ENCODE measurements at regions of chr11 and their contacts with region 1.

Region 1: GRCh38 chr11:26649884-26650283 is 72.0 kb downstream of the SLC5A12 start:
- DNase-seq: peak; percentile 61
- H3K4me3 ChIP-seq: no peak overlapping the region
- H3K27ac ChIP-seq: no peak overlapping the region
- H3K4me1 ChIP-seq: no peaks in the 10 kb centered on the region
- H3K27me3 ChIP-seq: no peaks in the 10 kb centered on the region
- CTCF ChIP-seq: peak; percentile 51 to 67 (median 65)
- EP300 ChIP-seq: no peak
- POLR2A ChIP-seq: no peak

Region 2: DNA sequence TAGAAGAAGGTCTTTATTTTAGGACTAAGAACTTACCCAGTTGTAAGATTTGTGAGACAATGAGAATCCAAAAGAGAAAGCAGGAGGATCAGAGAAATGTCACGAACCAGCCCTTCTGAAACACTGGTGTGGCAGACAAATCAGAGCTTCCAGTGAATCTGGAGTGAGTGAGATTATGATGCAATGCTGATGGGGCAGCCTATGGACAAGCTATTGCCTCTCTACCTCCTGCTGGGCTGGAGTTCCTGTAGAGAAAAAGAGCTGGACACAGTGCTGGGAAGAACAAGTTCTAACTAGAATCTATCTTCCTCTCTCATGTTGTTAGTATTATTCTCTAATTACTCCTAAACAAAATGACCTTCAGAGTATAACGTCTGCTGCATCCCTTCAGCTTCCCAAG is 330.0 kb before region 1 on chr11:
- in situ Hi-C with region 1: loop called in 1 of 4 experiments (anchors 25 kb)
- intact Hi-C with region 1: no loop called
- DNase-seq: no peak
- H3K4me3 ChIP-seq: no peak overlapping the region
- H3K27ac ChIP-seq: no peak overlapping the region
- H3K4me1 ChIP-seq: no peaks in the 10 kb centered on the region
- H3K27me3 ChIP-seq: no peaks in the 10 kb centered on the region
- CTCF ChIP-seq: no peak
- EP300 ChIP-seq: no peak
- POLR2A ChIP-seq: no peak

Measured in transverse colon (tissue), 4 donors.